Astrocyte of the cerebellum (primary cell): ENCODE measurements at regions of chr19 and their contacts with region 1.

Region 1: DNA sequence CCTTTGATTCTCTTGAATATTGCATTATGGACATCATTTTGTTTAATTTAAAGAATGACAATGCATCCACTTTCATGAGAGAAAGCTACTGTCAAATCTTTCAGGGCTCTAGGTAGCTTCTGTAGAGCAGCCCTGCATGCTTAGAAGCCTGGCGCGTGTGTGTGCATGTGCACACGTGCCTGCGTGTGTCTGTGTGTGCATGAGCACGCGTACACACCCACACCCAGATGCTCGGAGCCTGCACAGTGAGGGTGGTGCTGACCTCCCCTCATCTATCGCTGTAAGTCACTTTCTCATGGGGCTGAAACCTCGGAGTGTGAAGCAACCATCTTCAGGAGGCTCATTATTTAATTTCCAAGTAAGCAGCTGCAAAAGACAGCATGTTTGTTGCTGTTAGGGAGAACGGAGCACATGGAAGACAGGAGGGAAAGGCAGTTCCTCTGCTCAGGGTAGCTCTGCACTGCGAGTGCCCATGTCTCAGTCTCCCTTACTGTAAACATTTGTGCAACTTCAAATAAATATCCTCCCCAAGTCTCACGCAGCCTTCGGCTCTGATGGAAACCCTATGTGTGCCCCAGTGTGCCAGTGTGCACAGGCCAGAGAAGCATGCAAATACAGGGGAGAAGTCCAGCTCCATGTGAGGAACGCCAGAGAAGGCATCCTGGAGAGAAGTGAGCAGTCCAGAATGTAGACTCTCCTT is 22.8 kb downstream of the TSHZ3 start:
- DNase-seq: no peak
- H3K4me3 ChIP-seq: no peak overlapping the region
- CTCF ChIP-seq: no peak

Region 2: GRCh38 chr19:31270897-31271296 is 55.6 kb before region 1 on chr19:
- in situ Hi-C with region 1: loop called (anchors 5 kb)
- DNase-seq: peak; percentile 81
- H3K4me3 ChIP-seq: no peak overlapping the region
- CTCF ChIP-seq: no peak

Region 3: GRCh38 chr19:31378404-31378803 is 51.9 kb after region 1 on chr19:
- in situ Hi-C with region 1: no loop called
- DNase-seq: peak; percentile 88
- H3K4me3 ChIP-seq: no peak overlapping the region
- CTCF ChIP-seq: no peak